ENCODE measurements at regions of chr7 and their contacts with region 1.

Region 1: GRCh38 chr7:101287032-101287431 is 34.6 kb downstream of the IFT22 start:
- DNase-seq: no peak
- ATAC-seq: no peak
- H3K4me3 ChIP-seq: no peak overlapping the region
- H3K27ac ChIP-seq: no peak overlapping the region
- H3K4me1 ChIP-seq: peaks cover 4% of the 10 kb centered on the region
- H3K27me3 ChIP-seq: no peaks in the 10 kb centered on the region; a peak in 2 of 4 replicates
- CTCF ChIP-seq: no peak
- EP300 ChIP-seq: no peak
- POLR2A ChIP-seq: no peak
- RAD21 ChIP-seq: no peak

Region 2: DNA sequence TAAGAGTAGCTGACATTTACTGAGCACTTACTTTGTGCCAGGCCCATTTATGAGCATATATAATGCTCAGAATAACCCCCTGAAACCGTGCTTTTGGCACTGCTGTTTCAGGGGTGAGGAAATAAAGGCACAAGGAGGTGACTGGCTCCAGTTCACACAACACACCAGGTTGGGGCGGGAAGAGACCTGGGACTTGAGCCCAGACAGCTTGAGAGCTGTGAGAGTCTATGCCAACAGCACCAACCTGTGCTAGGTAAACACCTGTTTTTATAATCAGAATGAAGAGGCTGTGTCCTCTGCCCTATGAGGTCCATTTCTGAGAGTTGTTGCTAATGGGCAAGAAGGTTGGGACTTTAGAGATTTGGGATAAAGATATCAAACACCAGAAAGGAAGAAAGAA is 1302.4 kb before region 1 on chr7:
- CTCF ChIA-PET with region 1: no interaction called
- POLR2A ChIA-PET with region 1: no interaction called
- RAD21 ChIA-PET with region 1: no interaction called
- SMC1A ChIA-PET with region 1: no interaction called
- in situ Hi-C with region 1: loop called (anchors 5 kb)
- intact Hi-C with region 1: no loop called
- DNase-seq: no peak
- ATAC-seq: no peak
- H3K4me3 ChIP-seq: no peak overlapping the region
- H3K27ac ChIP-seq: no peak overlapping the region
- H3K4me1 ChIP-seq: no peaks in the 10 kb centered on the region
- H3K27me3 ChIP-seq: peaks cover 0 to 2% of the 10 kb centered on the region in 2 experiments; a peak in 3 of 4 replicates
- CTCF ChIP-seq: no peak
- EP300 ChIP-seq: no peak
- POLR2A ChIP-seq: no peak
- RAD21 ChIP-seq: no peak

Region 3: GRCh38 chr7:101195884-101196283 is 91.1 kb before region 1 on chr7:
- CTCF ChIA-PET with region 1: interaction called, 65 read pairs
- POLR2A ChIA-PET with region 1: no interaction called
- RAD21 ChIA-PET with region 1: interaction called, 41 read pairs
- SMC1A ChIA-PET with region 1: interaction called, 17 read pairs
- in situ Hi-C with region 1: no loop called
- intact Hi-C with region 1: loop called (anchors 2 kb)
- DNase-seq: no peak
- ATAC-seq: no peak
- H3K4me3 ChIP-seq: no peak overlapping the region
- H3K27ac ChIP-seq: no peak overlapping the region
- H3K4me1 ChIP-seq: no peaks in the 10 kb centered on the region
- H3K27me3 ChIP-seq: peaks cover 0 to 5% of the 10 kb centered on the region in 2 experiments; a peak in 2 of 4 replicates
- CTCF ChIP-seq: no peak
- EP300 ChIP-seq: no peak
- POLR2A ChIP-seq: no peak
- RAD21 ChIP-seq: no peak

Region 4: GRCh38 chr7:101244375-101245146 is 42.5 kb before region 1 on chr7 and contains the start of gene FIS1:
- CTCF ChIA-PET with region 1: interaction called, 42 read pairs
- POLR2A ChIA-PET with region 1: interaction called, 3 read pairs
- RAD21 ChIA-PET with region 1: interaction called, 19 read pairs
- SMC1A ChIA-PET with region 1: interaction called, 8 read pairs
- in situ Hi-C with region 1: no loop called
- intact Hi-C with region 1: no loop called
- DNase-seq: peak; percentile 68
- ATAC-seq: peak; percentile 98
- H3K4me3 ChIP-seq: peak within 1 kb of the TSS; percentile 84
- H3K27ac ChIP-seq: peak within 1 kb of the TSS; percentile 89
- H3K4me1 ChIP-seq: peaks cover 6% of the 10 kb centered on the region
- H3K27me3 ChIP-seq: no peaks in the 10 kb centered on the region
- CTCF ChIP-seq: peak; percentile 79 to 95 (median 89); a peak in 5 of 6 replicates
- EP300 ChIP-seq: 0 out of 4 replicates have a peak, but pooled peaks of 1 of the 2 experiments have one; percentile 14
- POLR2A ChIP-seq: peak; percentile 94
- RAD21 ChIP-seq: peak; percentile 39; the same call in 1 of the 2 replicates
- polyA plus RNA-seq, gene FIS1: 83.4 to 88.5 TPM

Region 5: DNA sequence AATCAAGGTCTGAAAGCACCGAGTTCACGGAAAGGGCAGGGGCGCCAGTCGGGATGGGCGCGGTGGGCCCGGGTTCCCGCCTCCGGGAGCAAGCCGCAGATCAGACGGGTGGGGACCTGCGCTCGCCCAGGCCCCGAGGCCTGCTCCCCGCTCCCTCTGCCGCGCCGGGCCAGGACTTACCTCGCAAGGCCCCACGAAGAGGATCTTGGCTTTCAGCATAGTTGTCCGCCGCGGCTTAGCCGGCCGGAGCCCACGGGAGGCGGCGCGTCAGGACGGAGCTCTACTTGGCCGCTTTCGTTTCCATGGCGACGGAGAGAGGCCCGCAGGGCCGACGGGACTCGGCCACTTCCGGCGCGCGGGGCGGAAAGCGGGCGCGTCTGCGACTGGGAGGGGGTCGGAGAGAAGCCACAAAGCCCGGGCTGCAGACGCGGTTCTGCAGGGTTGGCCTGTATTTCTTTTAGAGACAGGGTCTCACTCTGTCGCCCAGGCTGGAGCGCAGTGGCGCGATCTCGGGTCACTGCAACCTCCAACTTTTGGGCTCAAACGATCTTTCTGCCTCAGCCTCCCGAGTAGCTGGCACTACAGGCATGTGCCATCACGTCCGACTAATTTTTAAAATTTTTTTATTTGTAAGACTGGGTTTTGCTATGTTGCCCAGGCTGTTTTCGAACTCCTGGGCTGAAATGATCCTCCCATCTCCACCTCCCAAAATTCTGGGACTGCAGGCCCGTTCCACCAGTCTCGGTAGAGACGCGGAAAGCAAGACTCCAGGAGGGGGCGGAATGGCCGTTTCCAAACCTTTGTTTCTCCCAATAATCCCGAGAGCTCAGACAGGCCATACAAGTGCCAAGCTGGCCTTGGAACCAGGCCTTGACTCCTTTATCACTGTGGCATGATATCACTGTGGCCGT is 34.7 kb after region 1 on chr7 and contains the start of gene IFT22:
- CTCF ChIA-PET with region 1: interaction called, 10 read pairs
- POLR2A ChIA-PET with region 1: no interaction called
- RAD21 ChIA-PET with region 1: interaction called, 4 read pairs
- SMC1A ChIA-PET with region 1: interaction called, 3 read pairs
- in situ Hi-C with region 1: no loop called
- intact Hi-C with region 1: no loop called
- DNase-seq: peak; percentile 36
- ATAC-seq: peak; percentile 100
- H3K4me3 ChIP-seq: peak within 1 kb of the TSS; percentile 76
- H3K27ac ChIP-seq: peak within 1 kb of the TSS; percentile 33
- H3K4me1 ChIP-seq: no peaks in the 10 kb centered on the region
- H3K27me3 ChIP-seq: no peaks in the 10 kb centered on the region
- CTCF ChIP-seq: peak in 2 of 3 experiments; percentile 7 to 17; a peak in 1 of 6 replicates
- EP300 ChIP-seq: no peak
- POLR2A ChIP-seq: peak; percentile 82
- RAD21 ChIP-seq: no peak
- polyA plus RNA-seq, gene IFT22: 22.2 TPM

Measured in GM12878 (cell line).